H1 (cell line): ENCODE measurements at regions of chr11 and their contacts with region 1.

Region 1: GRCh38 chr11:63710476-63711217 is 29.3 kb downstream of the RTN3 start:
- DNase-seq: peak in 1 of 2 experiments; percentile 38
- H3K4me3 ChIP-seq: no peak overlapping the region
- H3K27ac ChIP-seq: no peak overlapping the region
- H3K4me1 ChIP-seq: no peaks in the 10 kb centered on the region
- H3K27me3 ChIP-seq: no peaks in the 10 kb centered on the region
- CTCF ChIP-seq: no peak
- EP300 ChIP-seq: no peak
- POLR2A ChIP-seq: no peak
- RAD21 ChIP-seq: no peak

Region 2: DNA sequence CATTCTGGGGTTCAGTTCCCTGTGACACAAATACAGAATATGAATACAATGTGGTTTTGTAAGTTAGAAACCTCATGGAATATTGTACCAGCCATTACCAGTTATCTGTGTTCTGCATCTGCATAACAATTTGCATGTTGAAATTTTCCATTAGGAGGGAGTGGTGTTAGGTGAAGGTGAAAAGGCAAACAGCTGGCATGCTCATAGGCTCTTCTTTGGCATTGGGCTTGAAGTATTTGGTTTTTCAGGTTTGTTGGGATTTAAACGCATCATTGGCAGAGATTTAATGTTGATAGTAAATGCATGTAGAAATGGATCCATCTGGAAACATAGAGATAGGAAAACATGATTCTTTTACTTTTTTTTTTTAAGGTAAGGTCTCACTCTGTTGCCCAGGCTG is 10.7 kb before region 1 on chr11:
- CTCF ChIA-PET with region 1: interaction called, 10 read pairs
- POLR2A ChIA-PET with region 1: interaction called, 3 read pairs
- DNase-seq: no peak
- H3K4me3 ChIP-seq: no peak overlapping the region
- H3K27ac ChIP-seq: no peak overlapping the region
- H3K4me1 ChIP-seq: peaks cover 0 to 8% (median 2%) of the 10 kb centered on the region in 4 experiments; a peak in 3 of 7 replicates
- H3K27me3 ChIP-seq: no peaks in the 10 kb centered on the region
- CTCF ChIP-seq: no peak
- EP300 ChIP-seq: no peak
- POLR2A ChIP-seq: no peak
- RAD21 ChIP-seq: no peak